Heart right ventricle (tissue), 16 donors: ENCODE measurements at regions of chr2 and their contacts with region 1.

Region 1: DNA sequence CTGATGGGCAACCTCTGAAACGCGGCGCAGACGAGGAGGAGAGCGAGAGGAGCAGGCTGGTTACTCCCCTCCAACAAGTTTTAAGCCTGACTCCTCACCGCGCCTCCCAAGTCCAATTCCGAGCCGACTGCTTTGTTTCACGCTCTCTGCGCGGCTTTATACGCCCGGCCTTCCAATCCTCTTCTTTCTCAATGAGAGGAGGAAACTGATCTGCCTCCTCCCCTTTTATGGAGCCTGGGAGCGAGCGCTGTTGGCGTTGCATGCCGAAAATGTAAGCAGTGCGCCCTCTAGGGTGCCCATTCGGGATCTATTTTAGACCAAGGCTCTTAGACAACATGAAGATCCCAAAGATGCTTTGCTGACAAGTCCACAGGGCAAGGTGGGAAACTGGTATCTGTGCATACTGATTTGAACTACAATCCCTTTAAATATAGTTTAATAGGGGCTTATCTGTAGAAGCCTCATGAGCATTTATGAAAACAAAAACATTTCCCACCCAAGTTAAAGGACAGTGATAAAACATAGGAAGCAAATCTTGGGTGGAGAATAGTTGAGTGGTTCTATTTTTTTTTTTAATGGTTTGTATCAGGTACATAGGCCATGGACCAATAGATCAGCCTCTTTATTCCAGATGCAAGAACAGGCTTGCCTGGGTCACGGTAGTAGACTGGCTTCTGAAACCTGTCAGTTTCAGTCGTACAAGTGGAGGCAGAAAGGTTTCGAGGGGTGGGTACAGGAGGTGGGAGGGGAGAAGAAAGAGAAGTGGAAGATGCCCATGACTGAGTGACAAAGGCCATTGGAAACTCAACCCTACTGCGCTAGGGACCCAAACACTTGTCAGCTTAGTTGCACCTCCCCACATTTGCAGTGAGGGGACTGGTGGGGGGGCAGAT is at the start of gene RND3:
- DNase-seq: peak; percentile 91 to 98
- ATAC-seq: peak; percentile 72 to 84 (median 76)
- H3K4me3 ChIP-seq: peak within 1 kb of the TSS; percentile 51 to 91 (median 78)
- H3K27ac ChIP-seq: peak within 1 kb of the TSS; percentile 84 to 97 (median 95)
- H3K4me1 ChIP-seq: peaks cover 0 to 24% (median 19%) of the 10 kb centered on the region in 9 donors
- H3K27me3 ChIP-seq: peaks cover 0 to 38% (median 0%) of the 10 kb centered on the region in 7 donors
- CTCF ChIP-seq: peak; percentile 73 to 93 (median 84)
- total RNA-seq, gene RND3: 20.7 to 74.3 (median 41.0) TPM

Region 2: DNA sequence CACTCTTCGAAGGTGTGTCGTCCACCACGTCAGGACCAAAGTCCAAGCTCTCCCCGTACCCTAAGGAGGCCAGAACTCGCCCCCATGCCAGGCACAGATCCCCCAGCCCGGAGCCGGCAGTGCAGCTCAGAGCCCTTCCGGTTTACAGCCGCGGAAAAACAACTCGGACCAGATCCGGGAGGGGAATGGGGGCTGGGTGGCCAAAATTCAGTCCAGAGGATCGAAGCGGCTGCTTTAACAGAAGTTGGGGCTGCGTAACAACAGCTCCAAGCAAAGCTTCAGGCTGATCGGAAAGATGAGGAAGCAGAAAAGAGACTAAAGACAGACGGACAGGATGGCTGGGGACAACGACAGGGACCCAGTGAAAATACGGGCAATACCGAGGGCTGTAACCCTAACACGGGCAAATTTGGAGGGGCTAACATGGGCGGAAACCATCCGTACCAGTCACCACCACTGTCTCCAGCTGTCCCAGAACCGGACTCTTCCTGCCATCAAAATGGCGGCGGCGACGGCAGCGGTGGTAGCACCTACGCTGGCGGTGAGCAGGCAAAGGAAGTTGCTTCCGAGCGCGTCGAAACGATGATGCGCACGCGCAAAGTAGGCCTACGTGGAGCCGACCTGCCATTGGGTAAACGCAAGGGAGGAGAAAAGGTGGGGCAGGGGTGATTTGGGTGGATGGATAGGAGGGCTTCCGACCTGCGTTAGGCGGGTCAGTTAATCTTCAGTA is 900.4 kb before region 1 on chr2 and contains the start of gene MMADHC:
- intact Hi-C with region 1: loop called in 2 of 10 experiments (anchors 5 kb)
- DNase-seq: peak; percentile 94
- ATAC-seq: peak; percentile 98 to 100 (median 99)
- H3K4me3 ChIP-seq: peak within 1 kb of the TSS; percentile 60 to 94 (median 78)
- H3K27ac ChIP-seq: peak within 1 kb of the TSS; percentile 92 to 99 (median 94)
- H3K4me1 ChIP-seq: peaks cover 0 to 51% (median 37%) of the 10 kb centered on the region in 9 donors
- H3K27me3 ChIP-seq: no peaks in the 10 kb centered on the region
- CTCF ChIP-seq: no peak
- total RNA-seq, gene MMADHC: 111 to 132 (median 127) TPM

Region 3: DNA sequence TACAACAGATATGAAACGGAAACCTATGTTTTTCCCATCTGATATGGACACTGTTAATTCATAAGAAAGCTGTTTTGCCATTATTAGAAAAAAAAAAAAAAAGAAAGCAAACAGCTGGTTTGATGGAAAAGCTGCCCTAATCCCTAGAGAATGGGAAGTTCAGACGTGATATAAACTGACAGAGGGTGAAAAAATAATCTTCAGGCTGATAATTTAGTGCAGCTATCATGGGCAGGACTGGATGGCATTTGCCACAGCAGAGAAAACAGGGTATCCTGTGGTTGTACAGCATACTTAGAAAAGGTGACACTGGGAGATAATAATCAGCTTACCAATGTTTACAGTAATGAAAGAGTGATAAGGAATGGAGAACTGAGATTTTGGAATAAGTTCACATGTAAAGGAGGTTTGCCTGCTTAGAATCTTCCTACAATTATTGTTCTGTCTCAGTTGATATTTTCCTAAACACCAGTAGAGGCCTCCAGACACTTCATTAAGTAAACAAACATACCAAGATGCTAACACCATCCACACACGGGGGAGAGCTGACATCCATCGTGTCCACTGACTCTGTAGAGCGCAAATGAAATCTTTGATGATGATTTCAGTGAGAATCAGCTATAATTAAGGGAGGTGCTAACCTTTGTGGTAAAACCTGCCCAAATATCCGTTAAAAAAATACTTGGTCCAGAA is 688.6 kb before region 1 on chr2:
- intact Hi-C with region 1: loop called in 8 of 10 experiments (anchors 2 to 10 kb)
- DNase-seq: no peak
- ATAC-seq: peak in 7 of 8 donors; percentile 50 to 88 (median 77)
- H3K4me3 ChIP-seq: no peak overlapping the region
- H3K27ac ChIP-seq: no peak overlapping the region
- H3K4me1 ChIP-seq: no peaks in the 10 kb centered on the region
- H3K27me3 ChIP-seq: no peaks in the 10 kb centered on the region
- CTCF ChIP-seq: peak in 7 of 9 donors; percentile 37 to 64 (median 53)

Region 4: DNA sequence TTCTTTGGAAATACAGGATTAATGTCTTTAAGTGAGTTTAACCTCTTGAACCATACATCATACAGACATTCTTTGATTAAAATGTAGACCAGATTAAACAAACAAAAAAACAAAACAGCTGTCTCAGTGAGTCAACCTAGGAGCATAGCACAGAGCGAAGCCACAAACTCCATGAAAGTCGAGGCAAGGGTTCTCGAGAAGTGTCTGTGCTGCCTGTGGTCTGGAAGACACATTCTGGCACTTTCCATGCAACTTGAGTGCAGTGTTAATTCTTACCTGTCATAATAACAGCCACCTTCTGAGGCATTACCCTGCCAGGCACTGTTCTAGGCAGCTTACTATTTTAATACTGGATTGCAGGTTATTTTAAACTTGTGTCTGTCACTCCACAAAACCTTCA is 464.7 kb before region 1 on chr2:
- intact Hi-C with region 1: loop called in 1 of 10 experiments (anchors 10 kb)
- DNase-seq: no peak
- ATAC-seq: no peak
- H3K4me3 ChIP-seq: no peak overlapping the region
- H3K27ac ChIP-seq: no peak overlapping the region
- H3K4me1 ChIP-seq: no peaks in the 10 kb centered on the region
- H3K27me3 ChIP-seq: no peaks in the 10 kb centered on the region
- CTCF ChIP-seq: no peak

Region 5: GRCh38 chr2:150425121-150425955 is 62.4 kb before region 1 on chr2:
- intact Hi-C with region 1: loop called in 6 of 10 experiments (anchors 1 to 10 kb)
- DNase-seq: peak; percentile 20 to 47
- ATAC-seq: peak; percentile 74 to 95 (median 94)
- H3K4me3 ChIP-seq: peak overlapping the region in 7 of 10 donors; percentile 19 to 45 (median 39)
- H3K27ac ChIP-seq: peak overlapping the region in 8 of 10 donors; percentile 18 to 73 (median 54)
- H3K4me1 ChIP-seq: peaks cover 0 to 4% (median 0%) of the 10 kb centered on the region in 9 donors
- H3K27me3 ChIP-seq: no peaks in the 10 kb centered on the region
- CTCF ChIP-seq: peak in 8 of 9 donors; percentile 29 to 56 (median 46)

Region 6: GRCh38 chr2:150513647-150514046 is 25.9 kb after region 1 on chr2:
- intact Hi-C with region 1: no loop called
- DNase-seq: no peak
- ATAC-seq: no peak
- H3K4me3 ChIP-seq: no peak overlapping the region
- H3K27ac ChIP-seq: no peak overlapping the region
- H3K4me1 ChIP-seq: peaks cover 0 to 4% (median 0%) of the 10 kb centered on the region in 9 donors
- H3K27me3 ChIP-seq: no peaks in the 10 kb centered on the region
- CTCF ChIP-seq: no peak

Region 7: DNA sequence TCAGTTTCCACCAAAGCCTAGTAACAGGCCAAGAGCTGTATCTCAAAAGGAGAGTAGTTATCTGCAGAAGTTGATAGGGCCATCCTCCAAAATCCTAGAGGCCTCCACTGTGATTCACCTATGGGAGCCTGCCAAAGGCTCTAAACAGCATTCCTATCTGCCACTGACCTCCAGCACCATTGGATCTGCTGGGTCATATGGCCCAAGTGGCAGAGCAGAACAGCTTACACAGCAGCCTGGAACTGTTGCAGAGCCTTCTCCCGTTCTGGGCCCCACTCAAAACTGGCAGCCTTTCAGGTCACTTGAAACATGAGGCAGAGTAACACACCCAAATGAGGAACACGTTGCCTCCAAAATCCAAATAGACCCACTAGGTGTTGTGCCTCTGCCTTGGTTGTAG is 344.9 kb after region 1 on chr2:
- intact Hi-C with region 1: no loop called
- DNase-seq: no peak
- ATAC-seq: no peak
- H3K4me3 ChIP-seq: no peak overlapping the region
- H3K27ac ChIP-seq: no peak overlapping the region
- H3K4me1 ChIP-seq: no peaks in the 10 kb centered on the region
- H3K27me3 ChIP-seq: no peaks in the 10 kb centered on the region
- CTCF ChIP-seq: no peak